MCF 10A (cell line): ENCODE measurements at regions of chr19 and their contacts with region 1.

Region 1: DNA sequence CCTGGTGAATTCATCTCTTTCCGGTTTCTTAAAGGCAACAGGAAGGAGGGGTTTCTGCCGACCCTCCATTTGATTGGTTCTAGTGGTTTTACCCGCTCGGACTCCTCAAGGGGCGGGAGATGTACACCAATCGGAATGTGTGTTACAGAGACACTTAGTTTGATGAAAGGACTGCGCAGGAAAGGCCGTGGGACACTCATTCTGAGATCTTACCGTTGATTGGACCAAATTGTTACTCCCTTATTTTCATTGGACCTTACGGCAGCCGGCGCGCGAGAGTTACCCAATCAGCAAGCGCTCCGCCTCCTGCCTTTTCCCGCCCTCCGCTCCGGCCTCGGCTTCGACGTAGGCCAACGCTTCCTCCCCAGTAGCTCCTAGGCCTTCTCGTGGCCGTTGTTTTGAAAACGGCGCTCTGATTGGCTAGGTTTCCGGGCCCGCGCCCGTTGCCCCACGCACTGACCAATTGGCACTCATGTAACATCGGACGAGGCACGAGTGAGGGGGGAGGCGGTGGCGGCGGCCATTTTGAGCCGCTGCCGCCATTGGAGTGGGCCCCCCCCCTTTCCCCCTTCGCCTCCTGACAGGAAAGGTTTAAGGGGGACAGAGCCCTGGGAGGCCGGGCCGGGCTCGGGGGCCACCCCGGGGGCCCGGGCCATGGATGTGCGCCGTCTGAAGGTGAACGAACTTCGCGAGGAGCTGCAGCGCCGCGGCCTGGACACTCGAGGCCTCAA is at the start of gene HNRNPUL1:
- DNase-seq: peak; percentile 100
- H3K4me3 Mint-ChIP-seq: peak within 1 kb of the TSS; percentile 89
- H3K27ac Mint-ChIP-seq: peak within 1 kb of the TSS; percentile 100
- H3K4me1 Mint-ChIP-seq: peaks cover 42% of the 10 kb centered on the region
- H3K27me3 Mint-ChIP-seq: no peaks in the 10 kb centered on the region
- CTCF ChIP-seq: peak; percentile 25
- total RNA-seq, gene HNRNPUL1: 179 and 204 TPM in 2 replicates

Region 2: DNA sequence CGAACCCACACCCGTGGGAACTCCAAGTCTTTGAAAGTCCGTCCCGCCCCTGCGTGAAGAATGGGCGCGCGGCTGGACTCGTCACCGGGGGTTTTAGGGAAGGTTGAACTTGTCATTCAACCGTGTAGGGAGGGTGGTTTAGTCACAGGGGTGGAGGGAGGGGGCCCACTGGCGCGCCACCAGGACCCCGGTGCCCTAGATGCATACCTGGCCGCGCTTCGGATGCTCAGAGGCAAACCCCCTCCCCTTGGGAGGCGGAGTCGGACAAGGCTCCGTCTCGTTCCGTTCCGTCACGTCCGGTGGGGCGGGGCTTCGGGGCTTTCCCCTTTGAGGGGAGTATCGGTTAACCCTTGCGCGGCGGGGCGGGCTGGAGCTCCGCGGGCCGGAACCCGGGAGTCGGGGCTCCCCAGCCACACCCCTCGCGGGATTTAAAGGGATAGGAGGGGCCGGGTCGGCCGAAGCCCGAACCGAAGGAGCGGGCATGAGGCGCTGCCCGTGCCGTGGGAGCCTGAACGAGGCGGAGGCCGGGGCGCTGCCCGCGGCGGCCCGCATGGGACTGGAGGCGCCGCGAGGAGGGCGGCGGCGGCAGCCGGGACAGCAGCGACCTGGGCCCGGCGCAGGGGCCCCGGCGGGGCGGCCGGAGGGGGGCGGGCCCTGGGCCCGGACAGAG is 547.2 kb before region 1 on chr19 and contains the starts of genes COQ8B and ITPKC:
- CTCF ChIA-PET with region 1: no interaction called
- POLR2A ChIA-PET with region 1: interaction called, 23 read pairs
- intact Hi-C with region 1: no loop called
- DNase-seq: peak; percentile 100
- H3K4me3 Mint-ChIP-seq: peak within 1 kb of the TSS; percentile 92
- H3K27ac Mint-ChIP-seq: peak within 1 kb of the TSS; percentile 95
- H3K4me1 Mint-ChIP-seq: peaks cover 39% of the 10 kb centered on the region
- H3K27me3 Mint-ChIP-seq: no peaks in the 10 kb centered on the region
- CTCF ChIP-seq: no peak
- total RNA-seq, gene COQ8B: 41.7 and 46.7 TPM in 2 replicates
- total RNA-seq, gene ITPKC: 27.1 and 33.2 TPM in 2 replicates

Region 3: GRCh38 chr19:41206926-41207750 is 56.9 kb before region 1 on chr19:
- CTCF ChIA-PET with region 1: interaction called, 137 read pairs
- POLR2A ChIA-PET with region 1: interaction called, 80 read pairs
- intact Hi-C with region 1: loop called (anchors 1 kb)
- DNase-seq: no peak
- H3K4me3 Mint-ChIP-seq: no peak overlapping the region
- H3K27ac Mint-ChIP-seq: peak overlapping the region; percentile 61
- H3K4me1 Mint-ChIP-seq: peaks cover 17% of the 10 kb centered on the region
- H3K27me3 Mint-ChIP-seq: no peaks in the 10 kb centered on the region
- CTCF ChIP-seq: no peak

Region 4: DNA sequence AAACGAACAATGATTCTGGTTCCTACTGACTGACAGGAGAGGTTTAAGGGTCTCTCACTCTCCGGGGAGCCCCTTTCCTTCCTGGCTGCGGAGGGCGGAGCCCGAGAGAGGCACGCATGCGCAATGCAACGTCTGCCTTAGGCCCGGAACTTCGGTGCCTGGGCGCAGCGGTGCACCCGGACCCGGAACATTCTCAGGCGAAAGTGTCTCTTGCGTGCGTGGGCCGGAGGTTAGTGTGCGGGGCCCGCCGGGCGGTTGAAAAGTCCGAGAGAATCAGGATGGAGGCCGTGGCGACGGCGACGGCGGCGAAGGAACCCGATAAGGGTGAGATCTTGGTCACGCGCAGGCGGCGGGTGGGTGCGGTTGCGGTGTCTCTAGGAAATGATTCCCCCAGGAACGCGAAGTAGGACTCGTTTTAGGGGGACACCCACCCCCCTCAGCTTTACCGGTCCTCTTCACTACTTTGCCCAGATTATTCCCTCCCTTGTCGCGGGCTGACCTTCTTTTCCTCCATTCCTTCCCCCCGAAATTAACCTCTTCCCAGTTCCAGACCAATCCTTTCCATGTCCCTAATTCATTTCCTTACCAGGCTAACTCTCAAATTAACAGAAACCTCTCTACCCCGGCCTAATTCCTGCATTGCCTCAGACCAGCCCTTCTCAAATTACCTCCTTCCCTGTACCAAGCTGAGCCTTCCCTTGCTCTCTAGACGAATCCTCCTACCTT is 46.2 kb after region 1 on chr19 and contains the start of gene CCDC97:
- CTCF ChIA-PET with region 1: interaction called, 18 read pairs
- POLR2A ChIA-PET with region 1: interaction called, 54 read pairs
- intact Hi-C with region 1: loop called (anchors 2 kb)
- DNase-seq: peak; percentile 86
- H3K4me3 Mint-ChIP-seq: peak within 1 kb of the TSS; percentile 87
- H3K27ac Mint-ChIP-seq: peak within 1 kb of the TSS; percentile 96
- H3K4me1 Mint-ChIP-seq: peaks cover 29% of the 10 kb centered on the region
- H3K27me3 Mint-ChIP-seq: no peaks in the 10 kb centered on the region
- CTCF ChIP-seq: no peak
- total RNA-seq, gene CCDC97: 25.0 and 28.5 TPM in 2 replicates

Region 5: GRCh38 chr19:41363753-41364523 is 99.9 kb after region 1 on chr19 and contains the start of gene B9D2:
- CTCF ChIA-PET with region 1: interaction called, 5 read pairs
- POLR2A ChIA-PET with region 1: interaction called, 18 read pairs
- intact Hi-C with region 1: no loop called
- DNase-seq: peak; percentile 99
- H3K4me3 Mint-ChIP-seq: peak within 1 kb of the TSS; percentile 98
- H3K27ac Mint-ChIP-seq: peak within 1 kb of the TSS; percentile 100
- H3K4me1 Mint-ChIP-seq: peaks cover 21% of the 10 kb centered on the region
- H3K27me3 Mint-ChIP-seq: no peaks in the 10 kb centered on the region
- CTCF ChIP-seq: no peak
- total RNA-seq, gene B9D2: 5.5 and 5.7 TPM in 2 replicates